ENCODE measurements at regions of chr6 and their contacts with region 1.

Region 1: DNA sequence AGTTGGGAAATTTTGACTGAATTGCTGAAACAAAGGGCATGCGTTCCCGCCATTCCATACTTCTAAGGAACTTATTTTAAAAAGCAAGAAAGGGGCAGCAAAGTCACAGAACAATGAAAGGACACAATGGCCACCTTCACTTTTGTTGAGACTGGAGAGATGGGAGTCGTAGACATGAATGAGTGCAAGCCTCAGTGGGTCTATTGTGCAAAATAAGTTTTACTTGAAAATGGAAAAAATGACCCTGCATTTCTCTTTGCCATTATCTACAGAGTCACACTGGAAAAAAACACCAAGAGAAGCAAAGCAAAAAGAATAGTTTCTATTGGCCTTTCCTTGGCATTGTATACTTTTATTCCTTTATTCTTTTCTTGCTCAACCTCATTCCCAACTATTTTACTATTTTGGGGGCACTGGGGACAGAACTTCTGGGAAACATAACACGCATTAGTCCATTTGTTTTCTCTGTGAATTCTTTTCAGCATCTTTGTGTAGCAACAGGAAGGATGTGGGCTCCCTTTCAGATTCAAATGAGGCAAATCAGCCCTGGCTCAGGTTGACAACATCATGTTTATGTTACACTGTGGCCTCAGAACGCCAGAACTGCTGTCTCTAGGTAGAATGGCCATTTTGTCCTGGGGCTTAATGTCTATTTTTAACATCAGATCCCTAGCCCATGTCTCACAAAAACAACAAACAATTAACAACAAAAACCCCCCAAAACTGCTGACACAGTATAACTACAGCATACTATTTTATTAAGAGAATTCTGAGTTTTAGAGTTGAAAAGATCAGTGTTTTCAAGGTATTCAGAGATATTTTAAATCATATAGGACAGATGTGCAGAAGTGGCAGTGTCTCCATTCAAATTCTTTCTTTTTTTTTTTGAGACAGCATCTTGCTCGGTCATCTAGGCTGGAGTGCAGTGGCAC is 122.2 kb downstream of the FYN start:
- DNase-seq: peak; percentile 91
- H3K4me3 Mint-ChIP-seq: peak overlapping the region; percentile 77
- H3K27ac Mint-ChIP-seq: peak overlapping the region; percentile 99
- H3K4me1 Mint-ChIP-seq: peaks cover 83% of the 10 kb centered on the region
- H3K27me3 Mint-ChIP-seq: no peaks in the 10 kb centered on the region

Region 2: GRCh38 chr6:111715321-111715720 is 35.7 kb before region 1 on chr6:
- intact Hi-C with region 1: loop called (anchors 2 kb)
- DNase-seq: peak; percentile 79
- H3K4me3 Mint-ChIP-seq: peak overlapping the region; percentile 67
- H3K27ac Mint-ChIP-seq: peak overlapping the region; percentile 92
- H3K4me1 Mint-ChIP-seq: peaks cover 62% of the 10 kb centered on the region
- H3K27me3 Mint-ChIP-seq: no peaks in the 10 kb centered on the region

Region 3: DNA sequence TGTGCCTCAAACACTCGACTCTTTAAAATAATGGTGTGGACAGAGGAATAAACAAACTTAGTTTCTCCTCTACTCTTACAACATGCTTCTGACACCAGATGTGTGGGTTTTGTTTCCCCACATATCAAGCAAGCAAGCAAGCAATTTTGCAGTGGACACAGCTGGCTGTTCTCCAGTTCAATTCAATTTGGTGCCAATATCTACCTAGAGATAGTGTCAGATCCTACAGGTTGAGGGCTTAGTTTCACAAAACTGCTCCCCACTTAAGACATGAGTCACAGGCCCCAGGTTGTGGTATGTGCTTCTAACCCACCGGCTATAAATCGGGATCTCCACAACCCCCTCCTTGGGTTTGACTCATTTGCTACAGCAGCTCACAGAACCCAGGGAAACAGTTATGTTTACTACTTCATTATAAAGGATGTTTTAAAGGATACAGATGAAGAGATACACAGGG is 13.9 kb before region 1 on chr6:
- intact Hi-C with region 1: loop called (anchors 1 kb)
- DNase-seq: no peak
- H3K4me3 Mint-ChIP-seq: peak overlapping the region; percentile 36
- H3K27ac Mint-ChIP-seq: peak overlapping the region; percentile 74
- H3K4me1 Mint-ChIP-seq: peaks cover 71% of the 10 kb centered on the region
- H3K27me3 Mint-ChIP-seq: no peaks in the 10 kb centered on the region

Measured in activated CD4-positive, alpha-beta T cell treated with anti-CD3 and anti-CD28 coated beads, Interleukin-2, amount 10 ng/mL, durations not matched to agents 24 days and 14 days (primary cell).